Heart right ventricle (tissue), 16 donors: ENCODE measurements at regions of chr15 and their contacts with region 1.

Region 1: DNA sequence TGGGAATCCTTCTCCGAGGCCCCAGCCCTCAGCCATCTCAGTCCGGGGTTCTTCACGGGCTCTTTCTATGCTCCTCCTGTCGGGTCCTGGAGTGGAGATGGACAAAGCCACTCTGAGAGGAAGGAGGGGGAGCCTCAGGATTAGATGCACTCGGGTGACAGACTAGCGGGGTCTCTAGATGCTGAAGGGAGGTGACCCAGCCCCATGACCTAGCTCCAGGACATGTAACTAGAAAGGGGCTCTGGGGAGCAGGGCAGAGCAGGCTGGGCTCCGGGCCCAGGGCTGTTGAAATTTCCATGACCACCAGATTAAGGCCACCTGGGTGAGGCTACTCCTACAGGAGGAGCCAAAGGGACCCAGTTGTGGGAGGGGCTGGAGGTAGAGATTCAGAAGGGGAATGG is 14.8 kb upstream of the SKIC8 start:
- DNase-seq: no peak
- ATAC-seq: no peak
- H3K4me3 ChIP-seq: no peak overlapping the region
- H3K27ac ChIP-seq: no peak overlapping the region
- H3K4me1 ChIP-seq: peaks cover 0 to 5% (median 0%) of the 10 kb centered on the region in 9 donors
- H3K27me3 ChIP-seq: peaks cover 0 to 4% (median 0%) of the 10 kb centered on the region in 7 donors
- CTCF ChIP-seq: no peak

Region 2: GRCh38 chr15:77821188-77821958 is 492.8 kb before region 1 on chr15:
- intact Hi-C with region 1: no loop called
- DNase-seq: peak; percentile 48 to 54
- ATAC-seq: peak in 7 of 8 donors; percentile 60 to 87 (median 81)
- H3K4me3 ChIP-seq: no peak overlapping the region
- H3K27ac ChIP-seq: no peak overlapping the region
- H3K4me1 ChIP-seq: peaks cover 0 to 11% (median 4%) of the 10 kb centered on the region in 9 donors
- H3K27me3 ChIP-seq: peaks cover 17 to 69% (median 63%) of the 10 kb centered on the region in 7 donors
- CTCF ChIP-seq: peak; percentile 40 to 75 (median 64)

Region 3: DNA sequence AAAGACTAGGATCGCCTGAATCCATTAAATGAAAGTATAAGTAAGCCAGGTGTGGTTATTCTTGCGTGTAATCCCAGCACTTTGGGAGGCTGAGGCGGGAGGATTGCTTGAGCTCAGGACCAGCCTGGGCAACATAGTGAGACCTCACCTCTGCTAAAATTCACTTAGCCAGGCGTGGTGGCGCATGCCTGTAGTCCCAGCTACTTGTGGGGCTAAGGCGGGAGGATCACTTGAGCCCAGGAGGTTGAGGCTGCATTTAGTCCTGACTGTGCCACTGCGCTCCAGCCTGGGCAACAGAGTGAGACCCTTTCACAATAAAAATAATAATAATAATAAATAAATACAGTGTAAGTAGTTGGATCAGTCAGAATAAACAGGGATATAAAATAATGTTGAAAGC is 167.7 kb after region 1 on chr15:
- intact Hi-C with region 1: loop called in 5 of 10 experiments (anchors 2 to 5 kb)
- DNase-seq: no peak
- ATAC-seq: no peak
- H3K4me3 ChIP-seq: no peak overlapping the region
- H3K27ac ChIP-seq: no peak overlapping the region
- H3K4me1 ChIP-seq: no peaks in the 10 kb centered on the region
- H3K27me3 ChIP-seq: no peaks in the 10 kb centered on the region
- CTCF ChIP-seq: no peak